ENCODE measurements at regions of chr12 and their contacts with region 1.

Region 1: DNA sequence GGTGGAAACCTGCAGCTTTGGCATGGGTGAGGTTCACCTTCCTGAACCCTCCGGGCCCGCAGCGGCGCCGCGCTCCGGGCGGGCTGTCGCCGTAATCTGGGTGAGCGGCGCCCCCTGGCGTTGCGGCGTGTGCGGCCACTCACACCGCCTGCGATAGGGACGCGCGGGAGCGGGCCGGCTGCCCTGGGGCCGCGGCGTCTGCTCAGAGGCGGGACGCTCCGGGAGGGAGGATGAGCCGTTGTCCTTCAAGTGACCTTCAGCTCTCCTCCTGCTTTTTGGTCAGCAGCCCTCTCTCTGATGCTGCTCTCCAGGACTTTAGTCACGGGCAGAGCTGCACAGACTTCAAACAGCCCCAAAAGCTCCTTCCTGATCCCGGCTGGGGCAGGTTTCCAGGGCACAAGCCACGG is 211.7 kb upstream of the FKBP4 start:
- DNase-seq: peak; percentile 92
- H3K4me3 ChIP-seq: peak overlapping the region in 1 of 2 experiments; percentile 26; a peak in 2 of 4 replicates
- H3K27ac ChIP-seq: no peak overlapping the region
- H3K4me1 ChIP-seq: peaks cover 0 to 24% of the 10 kb centered on the region in 2 experiments; a peak in 1 of 4 replicates
- H3K27me3 ChIP-seq: no peaks in the 10 kb centered on the region
- CTCF ChIP-seq: peak; percentile 76
- EP300 ChIP-seq: no peak; a peak in 1 of 4 replicates
- RAD21 ChIP-seq: peak; percentile 87

Region 2: GRCh38 chr12:2057041-2057794 is 525.9 kb before region 1 on chr12:
- CTCF ChIA-PET with region 1: interaction called, 47 read pairs
- POLR2A ChIA-PET with region 1: no interaction called
- DNase-seq: peak; percentile 75
- H3K4me3 ChIP-seq: peak overlapping the region in 1 of 2 experiments; percentile 31; a peak in 1 of 4 replicates
- H3K27ac ChIP-seq: no peak overlapping the region
- H3K4me1 ChIP-seq: peaks cover 0 to 33% of the 10 kb centered on the region in 2 experiments; a peak in 1 of 4 replicates
- H3K27me3 ChIP-seq: no peaks in the 10 kb centered on the region
- CTCF ChIP-seq: peak; percentile 83
- EP300 ChIP-seq: no peak
- RAD21 ChIP-seq: peak; percentile 86

Region 3: DNA sequence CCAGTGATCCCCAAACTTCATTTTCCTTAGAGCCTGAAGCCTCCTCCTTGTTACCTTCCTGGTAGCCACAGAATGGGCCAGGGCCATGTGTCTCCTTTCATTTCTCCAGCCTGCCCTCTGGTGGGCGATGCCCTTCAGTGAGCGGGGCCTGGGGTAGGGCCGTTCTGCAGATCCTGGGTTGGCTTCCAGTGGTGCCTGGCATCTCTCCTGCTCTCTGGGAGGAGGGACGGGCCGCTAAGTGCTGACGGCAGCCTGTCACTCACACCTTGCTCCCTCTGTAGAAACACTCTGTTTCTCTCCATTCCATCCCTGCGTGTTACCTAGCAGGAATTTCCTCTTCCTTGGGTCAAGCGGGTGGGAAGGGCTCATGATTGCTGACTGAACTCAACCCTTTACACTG is 298.2 kb before region 1 on chr12:
- CTCF ChIA-PET with region 1: interaction called, 62 read pairs
- POLR2A ChIA-PET with region 1: no interaction called
- DNase-seq: peak; percentile 86
- H3K4me3 ChIP-seq: peak overlapping the region; percentile 6 to 12; a peak in 2 of 4 replicates
- H3K27ac ChIP-seq: peak overlapping the region; percentile 87 to 99
- H3K4me1 ChIP-seq: peaks cover 37 to 76% of the 10 kb centered on the region in 2 experiments
- H3K27me3 ChIP-seq: no peaks in the 10 kb centered on the region
- CTCF ChIP-seq: peak; percentile 84
- EP300 ChIP-seq: no peak
- RAD21 ChIP-seq: peak; percentile 81

Region 4: GRCh38 chr12:2395354-2395977 is 187.6 kb before region 1 on chr12:
- CTCF ChIA-PET with region 1: interaction called, 12 read pairs
- POLR2A ChIA-PET with region 1: no interaction called
- DNase-seq: peak; percentile 78
- H3K4me3 ChIP-seq: peak overlapping the region in 1 of 2 experiments; percentile 39; a peak in 1 of 4 replicates
- H3K27ac ChIP-seq: no peak overlapping the region
- H3K4me1 ChIP-seq: no peaks in the 10 kb centered on the region; a peak in 1 of 4 replicates
- H3K27me3 ChIP-seq: no peaks in the 10 kb centered on the region; the same call in 1 of the 2 replicates
- CTCF ChIP-seq: peak; percentile 95
- EP300 ChIP-seq: no peak
- RAD21 ChIP-seq: peak; percentile 65

Region 5: DNA sequence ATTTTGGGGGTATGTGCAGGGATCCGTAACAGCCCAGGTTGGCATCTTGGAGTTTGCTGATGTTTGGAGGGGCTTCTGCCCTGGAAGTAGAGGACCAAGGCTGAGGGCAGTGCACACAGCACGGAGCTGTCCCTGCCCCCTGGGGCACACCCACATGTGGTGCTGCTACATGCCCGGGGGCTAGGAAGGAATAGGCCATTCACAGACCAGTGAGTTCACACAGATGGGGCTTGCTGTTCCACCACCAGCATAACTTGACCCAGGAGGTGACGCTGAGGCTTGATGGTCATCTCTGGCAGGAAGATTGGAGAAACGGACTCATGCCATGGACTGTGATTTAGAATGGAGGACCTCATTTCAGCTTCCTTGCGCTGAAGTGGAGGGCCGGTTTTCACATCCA is 19.4 kb before region 1 on chr12:
- CTCF ChIA-PET with region 1: interaction called, 27 read pairs
- POLR2A ChIA-PET with region 1: no interaction called
- DNase-seq: no peak
- H3K4me3 ChIP-seq: no peak overlapping the region
- H3K27ac ChIP-seq: no peak overlapping the region
- H3K4me1 ChIP-seq: peaks cover 0 to 12% of the 10 kb centered on the region in 2 experiments; a peak in 1 of 4 replicates
- H3K27me3 ChIP-seq: no peaks in the 10 kb centered on the region
- CTCF ChIP-seq: no peak
- EP300 ChIP-seq: no peak
- RAD21 ChIP-seq: no peak